IMR-90 (cell line): ENCODE measurements at regions of chr3 and their contacts with region 1.

Region 1: GRCh38 chr3:161409069-161409468 is 37.8 kb upstream of the SPTSSB start:
- DNase-seq: peak; percentile 23
- ATAC-seq: peak; percentile 75; the same call in 1 of the 2 replicates
- H3K4me3 ChIP-seq: no peak overlapping the region
- H3K27ac ChIP-seq: no peak overlapping the region
- H3K4me1 ChIP-seq: peaks cover 3% of the 10 kb centered on the region; the same call in 1 of the 2 replicates
- H3K27me3 ChIP-seq: no peaks in the 10 kb centered on the region
- CTCF ChIP-seq: peak; percentile 65
- POLR2A ChIP-seq: no peak
- RAD21 ChIP-seq: peak; percentile 60

Region 2: DNA sequence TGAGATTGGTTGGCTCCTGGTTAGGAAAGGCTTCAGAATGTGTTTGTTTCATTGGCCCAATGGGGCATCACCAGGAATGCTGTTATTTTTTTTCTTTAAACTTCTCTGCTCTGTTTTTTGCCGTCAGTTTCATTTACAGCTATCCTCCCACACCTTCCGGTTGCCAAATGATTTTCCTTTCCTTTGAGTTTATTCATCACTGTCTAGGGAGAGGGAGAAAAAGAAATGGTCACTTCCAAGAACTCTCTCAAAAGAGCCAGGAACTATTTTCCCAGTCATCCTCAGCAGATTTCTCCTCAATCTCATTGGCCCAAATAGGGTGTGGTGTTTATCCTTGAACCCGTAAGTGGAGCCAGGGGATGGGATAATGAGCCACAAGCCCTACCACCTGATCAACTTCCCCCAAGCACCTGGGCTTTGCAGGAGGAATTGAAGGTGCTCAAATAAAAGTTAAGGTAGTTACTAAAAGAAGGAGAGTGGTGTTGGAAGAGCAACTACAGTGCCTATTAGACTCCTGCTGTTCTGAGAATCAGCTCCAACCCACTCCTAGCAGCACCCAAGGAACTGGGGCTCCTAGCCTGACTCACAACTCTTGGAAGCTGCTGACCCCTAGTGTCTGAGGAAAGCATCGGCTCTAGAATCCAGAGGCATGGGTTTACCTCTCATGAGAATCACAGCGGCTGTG is 1604.2 kb before region 1 on chr3:
- CTCF ChIA-PET with region 1: no interaction called
- POLR2A ChIA-PET with region 1: no interaction called
- dilution Hi-C with region 1: no loop called
- in situ Hi-C with region 1: no loop called
- intact Hi-C with region 1: no loop called
- DNase-seq: peak; percentile 92
- ATAC-seq: peak; percentile 93
- H3K4me3 ChIP-seq: no peak overlapping the region
- H3K27ac ChIP-seq: no peak overlapping the region
- H3K4me1 ChIP-seq: peaks cover 22% of the 10 kb centered on the region
- H3K27me3 ChIP-seq: no peaks in the 10 kb centered on the region
- CTCF ChIP-seq: peak; percentile 95
- POLR2A ChIP-seq: no peak
- RAD21 ChIP-seq: peak; percentile 98

Region 3: GRCh38 chr3:160921020-160921635 is 487.9 kb before region 1 on chr3:
- CTCF ChIA-PET with region 1: no interaction called
- POLR2A ChIA-PET with region 1: no interaction called
- dilution Hi-C with region 1: no loop called
- in situ Hi-C with region 1: loop called (anchors 25 kb)
- intact Hi-C with region 1: loop called (anchors 5 kb)
- DNase-seq: peak; percentile 39
- ATAC-seq: peak; percentile 98
- H3K4me3 ChIP-seq: no peak overlapping the region
- H3K27ac ChIP-seq: no peak overlapping the region
- H3K4me1 ChIP-seq: no peaks in the 10 kb centered on the region
- H3K27me3 ChIP-seq: no peaks in the 10 kb centered on the region; the same call in none of the 2 replicates
- CTCF ChIP-seq: peak; percentile 83
- POLR2A ChIP-seq: no peak
- RAD21 ChIP-seq: peak; percentile 74

Region 4: DNA sequence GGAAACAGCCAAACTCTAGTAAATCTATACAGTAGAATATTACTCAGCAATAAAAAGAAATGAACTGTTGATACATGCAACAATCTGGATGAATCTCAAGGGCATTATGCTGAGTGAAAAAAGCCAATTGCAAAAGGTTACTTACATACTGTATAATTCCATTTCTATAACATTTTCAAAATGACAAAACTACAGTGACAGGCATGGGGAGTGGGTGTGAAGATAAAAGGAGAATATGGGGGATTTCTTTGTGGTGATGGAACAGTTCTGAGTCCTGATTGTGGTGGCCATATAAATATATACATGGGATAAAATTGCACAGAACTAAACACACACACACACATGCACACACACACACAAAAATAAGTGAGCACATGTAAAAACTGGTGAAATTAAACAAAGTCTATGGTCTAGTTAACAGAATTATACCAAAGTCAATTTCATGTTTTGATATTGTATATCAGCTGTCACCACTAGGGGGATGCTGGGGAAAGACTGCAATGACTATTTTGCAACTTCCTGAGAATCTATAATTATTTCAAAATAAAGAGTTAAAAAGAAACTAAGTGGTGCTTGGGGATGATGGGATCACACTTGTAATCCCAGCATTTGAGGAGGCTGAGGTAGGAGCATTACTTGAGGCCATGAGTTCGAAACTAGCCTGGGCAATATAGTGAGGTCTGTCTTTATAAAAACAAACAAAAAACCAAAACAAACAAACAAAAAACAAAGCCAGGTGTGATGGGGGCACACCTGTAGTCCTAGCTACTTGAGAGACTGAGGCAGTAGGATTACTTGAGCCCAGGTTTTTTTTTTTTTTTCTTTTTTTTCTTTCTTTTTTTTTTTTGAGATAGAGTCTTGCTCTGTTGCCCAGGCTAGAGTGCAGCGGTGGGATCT is 103.7 kb before region 1 on chr3:
- CTCF ChIA-PET with region 1: interaction called, 3 read pairs
- POLR2A ChIA-PET with region 1: no interaction called
- dilution Hi-C with region 1: no loop called
- in situ Hi-C with region 1: no loop called
- intact Hi-C with region 1: loop called (anchors 1 kb)
- DNase-seq: peak; percentile 27
- ATAC-seq: peak; percentile 62
- H3K4me3 ChIP-seq: no peak overlapping the region
- H3K27ac ChIP-seq: no peak overlapping the region
- H3K4me1 ChIP-seq: no peaks in the 10 kb centered on the region
- H3K27me3 ChIP-seq: no peaks in the 10 kb centered on the region
- CTCF ChIP-seq: peak; percentile 67
- POLR2A ChIP-seq: no peak
- RAD21 ChIP-seq: peak; percentile 42